ENCODE measurements at regions of chr1 and their contacts with region 1.

Region 1: DNA sequence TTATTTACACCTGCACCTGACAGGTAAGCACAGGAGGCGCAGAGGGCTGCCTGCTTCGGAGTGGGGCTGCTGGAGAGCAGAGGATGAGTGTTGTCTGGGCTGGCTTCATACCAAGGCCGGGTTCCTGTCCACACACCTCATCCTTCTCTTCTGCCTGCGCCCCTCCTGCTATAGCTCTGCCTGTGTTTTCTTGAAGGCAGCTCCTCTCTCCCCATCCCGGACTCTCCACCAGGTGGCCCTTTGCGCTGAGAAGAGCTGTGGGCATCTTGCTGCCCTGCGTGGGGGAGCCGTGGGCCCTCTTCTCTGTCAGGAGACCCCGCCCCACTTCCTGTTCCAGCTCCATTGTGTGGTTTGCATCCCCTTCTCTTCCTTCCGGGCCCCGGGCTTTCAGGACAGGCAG is 35.0 kb downstream of the ARHGEF10L start:
- DNase-seq: no peak
- H3K4me3 ChIP-seq: no peak overlapping the region
- H3K27ac ChIP-seq: no peak overlapping the region
- H3K4me1 ChIP-seq: peaks cover 15 to 62% (median 43%) of the 10 kb centered on the region in 4 experiments
- H3K27me3 ChIP-seq: no peaks in the 10 kb centered on the region
- CTCF ChIP-seq: peak in 2 of 3 experiments; percentile 46 to 55; a peak in 3 of 4 replicates
- EP300 ChIP-seq: no peak
- POLR2A ChIP-seq: no peak
- RAD21 ChIP-seq: peak; percentile 40 to 50; a peak in 3 of 4 replicates

Region 2: GRCh38 chr1:17475729-17476128 is 98.8 kb before region 1 on chr1:
- CTCF ChIA-PET with region 1: interaction called, 12 read pairs
- POLR2A ChIA-PET with region 1: no interaction called
- DNase-seq: no peak
- H3K4me3 ChIP-seq: no peak overlapping the region
- H3K27ac ChIP-seq: no peak overlapping the region
- H3K4me1 ChIP-seq: peaks cover 0 to 7% (median 2%) of the 10 kb centered on the region in 4 experiments; a peak in 4 of 7 replicates
- H3K27me3 ChIP-seq: no peaks in the 10 kb centered on the region
- CTCF ChIP-seq: no peak
- EP300 ChIP-seq: no peak
- POLR2A ChIP-seq: no peak
- RAD21 ChIP-seq: no peak

Region 3: GRCh38 chr1:17502326-17502778 is 72.2 kb before region 1 on chr1:
- CTCF ChIA-PET with region 1: interaction called, 1,640 read pairs
- POLR2A ChIA-PET with region 1: interaction called, 10 read pairs
- DNase-seq: peak; percentile 88 to 99
- H3K4me3 ChIP-seq: no peak overlapping the region
- H3K27ac ChIP-seq: no peak overlapping the region
- H3K4me1 ChIP-seq: peaks cover 0 to 2% (median 0%) of the 10 kb centered on the region in 4 experiments; a peak in 2 of 7 replicates
- H3K27me3 ChIP-seq: no peaks in the 10 kb centered on the region
- CTCF ChIP-seq: peak; percentile 98
- EP300 ChIP-seq: no peak
- POLR2A ChIP-seq: no peak
- RAD21 ChIP-seq: peak; percentile 98 to 99

Region 4: DNA sequence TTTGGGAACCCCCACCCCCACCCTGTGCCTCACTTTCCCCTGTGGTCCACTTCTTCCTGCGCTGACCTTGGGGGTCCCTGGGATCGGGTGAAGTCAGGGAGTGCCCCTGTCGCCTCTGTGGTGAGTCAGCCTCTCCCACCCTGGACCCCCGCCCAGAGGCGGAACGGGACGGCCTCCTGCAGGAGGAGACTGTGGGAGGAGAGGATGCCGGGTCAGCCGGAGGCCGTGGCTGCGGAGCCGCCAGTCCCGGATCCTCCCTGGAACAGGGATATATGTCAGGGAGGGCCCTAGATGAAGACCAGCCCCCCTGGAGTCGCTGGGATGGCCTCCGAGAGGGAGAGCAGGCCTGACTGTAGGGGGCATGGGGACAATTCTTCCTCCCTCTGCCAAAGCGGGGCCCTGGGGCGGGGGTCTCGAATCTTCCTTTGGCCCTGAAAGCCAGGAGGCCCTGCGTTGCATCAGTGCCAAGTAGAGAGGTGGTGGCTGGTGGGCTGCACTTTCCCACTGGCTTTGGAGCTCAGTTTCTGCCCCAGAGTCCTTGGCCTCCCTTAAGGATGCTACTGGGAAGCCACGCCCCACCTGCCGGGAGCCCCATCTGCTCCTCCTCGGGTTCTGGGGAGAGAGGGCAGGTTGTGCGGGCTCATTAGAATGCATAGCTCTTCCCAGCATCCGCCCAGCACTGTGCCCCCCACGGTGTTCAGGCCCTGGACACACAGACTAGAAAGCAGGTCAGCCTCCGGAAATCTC is 34.1 kb before region 1 on chr1:
- CTCF ChIA-PET with region 1: interaction called, 417 read pairs
- POLR2A ChIA-PET with region 1: interaction called, 24 read pairs
- DNase-seq: peak; percentile 66 to 90
- H3K4me3 ChIP-seq: peak overlapping the region; percentile 77 to 93 (median 87)
- H3K27ac ChIP-seq: peak overlapping the region; percentile 83
- H3K4me1 ChIP-seq: peaks cover 16 to 24% (median 20%) of the 10 kb centered on the region in 4 experiments
- H3K27me3 ChIP-seq: no peaks in the 10 kb centered on the region
- CTCF ChIP-seq: no peak
- EP300 ChIP-seq: no peak
- POLR2A ChIP-seq: peak; percentile 34 to 78
- RAD21 ChIP-seq: peak in 1 of 2 experiments; percentile 15; a peak in 1 of 4 replicates

Region 5: DNA sequence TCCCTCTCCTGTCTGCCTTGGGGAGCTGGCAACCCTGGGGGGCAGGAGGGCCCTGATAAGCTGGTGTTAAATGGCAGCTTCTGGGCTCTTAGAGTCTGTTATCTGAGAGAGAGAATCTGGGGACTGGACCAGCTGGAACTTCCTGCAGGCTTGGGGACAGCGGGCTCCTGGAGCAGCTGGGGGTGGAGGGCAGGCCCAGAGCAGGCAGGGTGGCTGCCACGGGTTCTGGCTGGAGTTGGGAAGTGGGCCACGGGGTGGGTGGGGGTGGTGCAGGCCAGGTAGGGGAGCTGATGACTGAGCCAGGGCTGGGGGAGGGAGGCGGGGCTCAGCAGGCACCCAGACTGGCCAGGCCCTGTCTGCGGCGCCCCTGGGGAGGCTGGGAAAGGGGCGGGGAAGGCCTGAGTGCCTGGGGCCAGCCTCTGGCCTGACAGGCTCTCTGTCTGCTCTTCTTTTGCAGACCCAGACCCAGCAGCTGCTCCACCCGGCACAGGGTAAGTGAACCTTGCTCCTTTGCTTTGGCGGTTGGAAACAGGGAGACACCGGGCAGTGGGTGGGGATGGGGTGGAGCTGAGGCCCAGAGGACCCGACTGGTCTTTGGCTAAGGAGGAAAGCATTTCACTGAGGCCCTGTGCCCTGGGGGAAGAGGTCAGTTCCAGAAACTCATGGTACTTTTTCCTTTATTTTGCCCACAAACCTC is 13.6 kb after region 1 on chr1:
- CTCF ChIA-PET with region 1: interaction called, 612 read pairs
- POLR2A ChIA-PET with region 1: interaction called, 12 read pairs
- DNase-seq: no peak
- H3K4me3 ChIP-seq: peak overlapping the region in 1 of 4 experiments; percentile 34; a peak in 2 of 8 replicates
- H3K27ac ChIP-seq: peak overlapping the region; percentile 64
- H3K4me1 ChIP-seq: peaks cover 10 to 35% (median 24%) of the 10 kb centered on the region in 4 experiments
- H3K27me3 ChIP-seq: no peaks in the 10 kb centered on the region; a peak in 1 of 7 replicates
- CTCF ChIP-seq: no peak
- EP300 ChIP-seq: no peak
- POLR2A ChIP-seq: no peak
- RAD21 ChIP-seq: no peak

Measured in H1 (cell line).